Activated naive CD8-positive, alpha-beta T cell treated with anti-CD3 and anti-CD28 coated beads, Interleukin-2, amount 10 ng/mL, durations not matched to agents 7 days and 5 days (primary cell): ENCODE measurements at regions of chr17 and their contacts with region 1.

Region 1: DNA sequence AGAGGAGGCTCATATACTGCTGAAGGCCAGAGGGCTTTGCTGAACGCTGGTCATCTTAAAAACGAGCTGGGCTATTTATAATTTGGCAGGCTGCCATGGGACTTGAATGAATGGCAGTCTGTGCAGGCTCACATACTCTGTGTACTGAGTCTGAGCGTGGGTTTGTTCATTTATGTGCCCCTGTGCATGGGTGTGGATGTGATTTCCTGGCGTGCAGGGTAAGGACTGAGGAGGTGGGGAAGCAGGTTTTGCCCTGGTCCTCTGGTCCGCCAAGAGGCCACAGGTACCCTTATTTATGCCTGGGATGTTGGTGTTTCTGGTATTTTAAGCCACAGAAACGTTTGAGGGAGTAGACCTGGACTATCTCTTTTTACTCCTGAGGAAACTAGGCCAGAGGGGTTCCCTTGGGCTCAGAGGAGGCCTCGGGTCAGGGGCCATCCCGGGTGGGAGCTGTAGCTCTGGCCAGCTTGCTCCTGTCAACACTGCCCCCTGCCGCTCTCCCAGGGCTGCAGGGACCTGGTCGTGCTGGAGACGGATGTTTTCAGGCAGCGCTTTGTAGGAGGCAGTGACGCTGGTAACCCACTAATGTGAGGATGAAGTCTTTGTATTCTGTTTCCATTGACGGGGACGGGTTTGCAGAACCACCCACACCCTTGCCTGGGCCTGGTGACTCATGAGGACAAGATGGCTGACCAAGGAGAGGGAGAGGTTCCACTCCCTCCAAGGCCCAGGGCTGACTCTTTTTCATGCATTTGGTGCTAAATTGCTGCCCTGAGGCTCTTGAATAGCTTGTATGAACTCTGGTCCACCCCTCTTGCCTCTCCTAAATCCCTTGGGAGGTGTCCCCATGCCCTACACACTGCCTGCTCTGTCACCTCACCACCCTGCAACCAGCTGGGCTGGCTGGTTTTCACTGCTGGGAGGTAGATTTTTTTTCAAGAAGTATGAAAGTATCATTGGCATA is 184.5 kb downstream of the MSI2 start:
- DNase-seq: peak; percentile 69
- ATAC-seq: peak; percentile 82
- H3K4me3 Mint-ChIP-seq: peak overlapping the region; percentile 68
- H3K27ac Mint-ChIP-seq: peak overlapping the region; percentile 96
- H3K4me1 Mint-ChIP-seq: peaks cover 53% of the 10 kb centered on the region
- H3K27me3 Mint-ChIP-seq: no peaks in the 10 kb centered on the region

Region 2: DNA sequence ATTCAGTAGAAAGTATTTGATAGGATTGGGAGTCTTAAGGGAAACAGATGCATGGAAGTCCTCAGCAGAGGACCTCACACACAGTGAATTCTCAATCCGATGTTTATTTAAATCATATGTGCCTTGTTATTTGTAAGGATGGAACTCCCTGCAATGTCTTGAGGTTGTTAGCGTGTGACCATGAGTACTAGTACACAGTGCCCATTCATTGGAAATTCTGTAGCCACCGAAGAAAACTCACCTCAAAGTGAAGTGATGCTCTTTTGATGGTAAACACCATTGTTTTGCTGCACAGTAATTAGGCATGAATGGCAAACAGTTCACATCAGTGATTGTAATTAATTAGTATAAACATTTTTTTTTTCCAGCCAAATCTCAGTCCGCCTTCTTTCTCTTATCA is 10.8 kb before region 1 on chr17:
- POLR2A ChIA-PET with region 1: no interaction called
- DNase-seq: no peak
- ATAC-seq: no peak
- H3K4me3 Mint-ChIP-seq: no peak overlapping the region
- H3K27ac Mint-ChIP-seq: no peak overlapping the region
- H3K4me1 Mint-ChIP-seq: peaks cover 18% of the 10 kb centered on the region
- H3K27me3 Mint-ChIP-seq: no peaks in the 10 kb centered on the region

Region 3: DNA sequence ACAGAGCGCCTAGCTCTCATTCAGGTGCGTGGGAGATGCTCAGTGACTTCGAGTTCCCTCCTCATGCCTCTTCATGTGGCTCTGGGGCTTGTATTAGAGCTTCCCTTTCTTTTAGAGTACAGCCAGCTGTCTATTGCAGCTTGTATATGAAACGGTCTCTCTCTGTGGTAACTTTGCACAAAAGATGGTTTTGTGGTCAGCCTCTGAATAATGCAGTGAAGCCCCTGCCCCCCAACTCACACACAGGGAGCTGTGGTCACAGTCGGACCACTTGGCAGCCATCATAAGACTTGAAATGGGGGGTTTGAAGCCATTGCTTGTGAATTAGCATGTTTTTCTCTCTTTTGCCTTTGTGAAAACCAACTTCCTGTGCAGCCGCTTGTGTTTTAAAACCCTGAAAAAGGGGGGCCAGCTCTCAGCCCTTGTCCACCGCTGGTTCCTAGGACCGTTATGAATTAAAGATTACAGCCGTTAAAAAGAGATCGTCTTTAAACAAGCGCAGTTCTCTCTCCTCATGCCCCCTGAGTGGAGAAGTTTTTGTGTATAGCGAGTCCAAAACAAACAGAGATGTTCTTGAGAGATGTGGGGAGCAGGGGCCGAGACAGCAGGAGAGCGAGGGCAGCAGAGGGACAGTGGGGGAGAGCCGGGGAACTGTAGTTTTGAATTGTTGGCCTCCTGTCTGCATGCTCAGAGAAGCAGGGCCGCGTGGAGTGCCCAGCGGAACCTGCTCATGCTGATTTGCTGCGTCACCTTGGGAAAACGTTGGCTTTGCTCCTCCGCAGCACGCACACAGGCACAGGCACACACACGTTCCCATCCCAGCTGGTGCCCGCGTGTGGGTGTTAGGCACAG is 14.5 kb after region 1 on chr17:
- POLR2A ChIA-PET with region 1: interaction called, 36 read pairs
- DNase-seq: peak; percentile 59
- ATAC-seq: peak; percentile 88
- H3K4me3 Mint-ChIP-seq: peak overlapping the region; percentile 49
- H3K27ac Mint-ChIP-seq: peak overlapping the region; percentile 85
- H3K4me1 Mint-ChIP-seq: peaks cover 54% of the 10 kb centered on the region
- H3K27me3 Mint-ChIP-seq: no peaks in the 10 kb centered on the region